ENCODE measurements at regions of chr3 and their contacts with region 1.

Region 1: DNA sequence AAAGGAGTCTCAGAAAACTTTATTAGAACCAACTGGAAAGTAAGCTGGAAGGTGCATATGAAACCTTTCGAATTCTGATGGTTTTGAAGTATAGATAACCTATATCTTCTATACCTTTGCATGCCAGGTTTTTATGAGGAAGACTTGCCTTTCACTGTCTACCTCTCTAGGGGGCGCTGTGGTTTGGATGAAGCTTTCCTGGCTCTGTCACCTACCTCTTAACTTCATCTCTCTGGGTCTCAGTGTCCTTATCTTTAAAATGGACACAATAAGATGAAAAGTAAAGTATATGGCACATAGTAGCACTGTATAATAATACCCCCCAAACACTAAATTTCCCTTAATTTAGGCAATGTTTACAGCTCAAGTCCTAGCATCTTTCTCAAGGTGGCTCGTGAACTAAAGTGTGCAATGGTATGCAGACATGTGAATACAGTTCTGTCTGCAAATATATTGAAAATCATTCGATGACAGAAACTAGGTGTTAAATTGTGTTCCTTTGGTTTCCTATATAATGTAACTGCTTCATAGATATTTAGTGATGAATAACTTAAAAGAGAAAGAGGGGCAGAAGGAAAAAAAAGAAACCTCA is 314.3 kb downstream of the CHST2 start:
- DNase-seq: no peak
- ATAC-seq: no peak
- H3K4me3 ChIP-seq: no peak overlapping the region
- H3K27ac ChIP-seq: no peak overlapping the region
- H3K4me1 ChIP-seq: no peaks in the 10 kb centered on the region
- H3K27me3 ChIP-seq: no peaks in the 10 kb centered on the region
- CTCF ChIP-seq: peak in 6 of 9 donors; percentile 21 to 48 (median 29)

Region 2: GRCh38 chr3:143644370-143645089 is 210.6 kb after region 1 on chr3:
- intact Hi-C with region 1: loop called in 2 of 10 experiments (anchors 10 kb)
- DNase-seq: peak in 1 of 2 donors; percentile 41
- ATAC-seq: peak in 5 of 8 donors; percentile 59 to 91 (median 64)
- H3K4me3 ChIP-seq: no peak overlapping the region
- H3K27ac ChIP-seq: no peak overlapping the region
- H3K4me1 ChIP-seq: peaks cover 0 to 7% (median 0%) of the 10 kb centered on the region in 9 donors
- H3K27me3 ChIP-seq: no peaks in the 10 kb centered on the region
- CTCF ChIP-seq: peak; percentile 28 to 71 (median 60)

Region 3: DNA sequence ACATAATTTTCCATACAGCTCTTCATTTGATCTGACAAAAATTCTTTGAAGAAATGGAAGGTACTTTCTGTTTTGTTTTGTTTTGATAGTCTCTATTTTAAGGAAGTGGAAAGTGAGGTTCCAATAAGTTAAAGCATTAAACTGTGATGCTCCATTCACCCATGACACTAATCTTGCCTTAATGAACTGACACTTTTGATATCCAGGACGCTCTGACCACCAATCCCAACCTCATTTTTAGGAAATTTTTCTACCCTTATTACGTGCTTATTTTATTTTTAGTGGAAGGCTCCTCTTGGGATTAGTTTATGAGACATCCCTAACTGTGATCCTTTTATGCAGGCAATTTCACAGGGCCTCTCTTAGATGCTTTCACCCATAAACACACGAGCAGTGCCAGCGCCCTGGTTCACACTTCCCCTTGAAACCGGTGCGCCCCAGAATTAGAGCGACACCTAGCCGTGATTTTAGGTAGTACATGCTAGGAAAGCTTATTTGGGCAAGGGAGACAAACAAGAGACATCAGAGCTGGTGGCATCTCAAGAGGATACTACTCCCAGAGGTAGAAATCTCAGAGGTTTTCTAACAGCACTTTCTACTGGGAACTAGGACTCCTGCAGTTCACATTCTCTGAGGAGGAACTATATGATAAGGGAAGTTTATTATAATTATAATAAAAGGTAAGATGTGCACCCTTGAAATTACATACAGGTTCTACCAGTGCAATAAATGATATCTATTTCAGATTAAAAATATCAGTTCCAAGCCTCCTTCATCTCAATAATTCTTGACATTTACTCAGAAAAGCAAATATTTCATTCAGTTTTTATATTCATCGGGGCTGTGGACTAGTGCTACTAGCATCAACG is 240.5 kb after region 1 on chr3:
- intact Hi-C with region 1: loop called in 1 of 10 experiments (anchors 10 kb)
- DNase-seq: peak; percentile 43 to 72
- ATAC-seq: peak in 6 of 8 donors; percentile 58 to 91 (median 72)
- H3K4me3 ChIP-seq: no peak overlapping the region
- H3K27ac ChIP-seq: no peak overlapping the region
- H3K4me1 ChIP-seq: peaks cover 0 to 7% (median 2%) of the 10 kb centered on the region in 9 donors
- H3K27me3 ChIP-seq: no peaks in the 10 kb centered on the region
- CTCF ChIP-seq: peak; percentile 72 to 95 (median 87)

Measured in heart right ventricle (tissue), 16 donors.